ENCODE measurements at regions of chr11 and their contacts with region 1.

Region 1: GRCh38 chr11:124070915-124071635 is 29.9 kb upstream of the OR10G7 start:
- DNase-seq: peak; percentile 76
- ATAC-seq: peak; percentile 47
- H3K4me3 Mint-ChIP-seq: no peak overlapping the region
- H3K27ac Mint-ChIP-seq: no peak overlapping the region
- H3K4me1 Mint-ChIP-seq: peaks cover 15% of the 10 kb centered on the region
- H3K27me3 Mint-ChIP-seq: peaks cover 20% of the 10 kb centered on the region

Region 2: GRCh38 chr11:124114942-124115781 is 44.1 kb after region 1 on chr11 and contains the start of gene VWA5A:
- CTCF ChIA-PET with region 1: interaction called, 10 read pairs
- DNase-seq: peak; percentile 88
- ATAC-seq: peak; percentile 100
- H3K4me3 Mint-ChIP-seq: peak within 1 kb of the TSS; percentile 80
- H3K27ac Mint-ChIP-seq: peak within 1 kb of the TSS; percentile 74
- H3K4me1 Mint-ChIP-seq: peaks cover 24% of the 10 kb centered on the region
- H3K27me3 Mint-ChIP-seq: peaks cover 8% of the 10 kb centered on the region
- total RNA-seq, gene VWA5A: 4.1 to 4.8 TPM

Region 3: GRCh38 chr11:124194698-124195410 is 123.8 kb after region 1 on chr11:
- CTCF ChIA-PET with region 1: interaction called, 27 read pairs
- DNase-seq: peak; percentile 56
- ATAC-seq: peak; percentile 88
- H3K4me3 Mint-ChIP-seq: no peak overlapping the region
- H3K27ac Mint-ChIP-seq: no peak overlapping the region
- H3K4me1 Mint-ChIP-seq: no peaks in the 10 kb centered on the region
- H3K27me3 Mint-ChIP-seq: peaks cover 22% of the 10 kb centered on the region